ENCODE measurements at regions of chr19 and their contacts with region 1.

Region 1: DNA sequence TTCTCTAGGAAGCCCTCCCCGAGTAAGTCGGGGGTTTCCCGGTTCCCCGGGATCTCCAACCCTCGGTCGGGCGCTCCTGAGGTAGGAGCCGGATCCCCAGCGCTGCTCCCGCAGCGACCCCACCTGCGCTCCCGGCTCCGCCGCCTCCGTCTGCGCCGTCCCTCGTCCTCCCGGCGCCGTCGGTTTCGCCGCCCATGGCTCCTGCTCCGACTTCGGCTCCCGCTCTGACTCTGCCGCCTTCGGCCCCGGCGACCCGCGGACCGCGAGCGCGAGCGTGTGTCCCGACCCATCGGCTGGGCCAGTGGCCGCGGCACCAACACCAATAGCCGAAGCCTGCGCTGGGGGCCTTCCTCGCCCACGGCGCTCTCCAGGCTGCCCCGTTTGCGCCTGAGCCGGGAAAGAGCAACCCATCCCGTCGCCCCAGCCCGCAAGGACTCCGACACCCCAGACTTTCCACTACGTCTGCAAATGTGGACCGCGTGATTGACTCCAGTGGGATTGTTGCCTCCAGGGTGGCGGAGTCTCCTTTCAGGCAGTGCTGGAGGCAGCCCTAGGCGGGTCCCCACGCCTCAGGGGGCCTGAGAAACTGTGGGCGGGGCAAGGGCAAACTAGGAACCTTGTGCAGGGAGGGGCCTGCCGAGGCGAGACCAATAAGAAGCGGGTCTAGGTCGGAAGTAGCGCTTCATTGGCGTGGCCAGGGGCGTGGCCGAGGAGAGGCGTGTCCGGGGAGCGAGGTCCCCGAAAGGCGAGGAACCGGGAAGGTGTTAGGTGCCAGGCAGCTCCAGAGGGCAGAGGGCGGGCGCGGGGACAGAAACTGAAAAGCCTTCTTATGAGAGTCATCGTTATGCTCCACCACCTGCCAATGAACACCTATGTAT is at the start of gene CACTIN:
- DNase-seq: peak; percentile 97 to 100 (median 99)
- ATAC-seq: peak; percentile 99
- H3K4me3 ChIP-seq: peak within 1 kb of the TSS; percentile 73
- H3K4me3 Mint-ChIP-seq: peak within 1 kb of the TSS; percentile 85 to 98 (median 94)
- H3K27ac ChIP-seq: peak within 1 kb of the TSS; percentile 81
- H3K27ac Mint-ChIP-seq: peak within 1 kb of the TSS; percentile 94 to 100 (median 99)
- H3K4me1 ChIP-seq: peaks cover 8 to 16% of the 10 kb centered on the region in 2 donors
- H3K4me1 Mint-ChIP-seq: peaks cover 23 to 43% (median 27%) of the 10 kb centered on the region in 7 donors
- H3K27me3 ChIP-seq: no peaks in the 10 kb centered on the region
- H3K27me3 Mint-ChIP-seq: no peaks in the 10 kb centered on the region
- total RNA-seq, gene CACTIN: 35.4 to 46.7 (median 37.1) TPM

Region 2: GRCh38 chr19:3185482-3186376 is 441.0 kb before region 1 on chr19 and contains the start of gene NCLN:
- CTCF ChIA-PET with region 1: no interaction called
- POLR2A ChIA-PET with region 1: no interaction called
- intact Hi-C with region 1: loop called in 1 of 2 experiments (anchors 5 kb)
- DNase-seq: peak; percentile 92 to 98 (median 95)
- ATAC-seq: peak; percentile 94
- H3K4me3 ChIP-seq: peak within 1 kb of the TSS; percentile 71
- H3K4me3 Mint-ChIP-seq: peak within 1 kb of the TSS; percentile 86 to 99 (median 94)
- H3K27ac ChIP-seq: peak within 1 kb of the TSS; percentile 74
- H3K27ac Mint-ChIP-seq: peak within 1 kb of the TSS; percentile 89 to 99 (median 91)
- H3K4me1 ChIP-seq: peaks cover 53 to 63% of the 10 kb centered on the region in 2 donors
- H3K4me1 Mint-ChIP-seq: peaks cover 43 to 66% (median 54%) of the 10 kb centered on the region in 7 donors
- H3K27me3 ChIP-seq: no peaks in the 10 kb centered on the region
- H3K27me3 Mint-ChIP-seq: peaks cover 0 to 2% (median 0%) of the 10 kb centered on the region in 5 donors
- total RNA-seq, gene NCLN: 45.4 to 64.7 (median 53.7) TPM

Region 3: DNA sequence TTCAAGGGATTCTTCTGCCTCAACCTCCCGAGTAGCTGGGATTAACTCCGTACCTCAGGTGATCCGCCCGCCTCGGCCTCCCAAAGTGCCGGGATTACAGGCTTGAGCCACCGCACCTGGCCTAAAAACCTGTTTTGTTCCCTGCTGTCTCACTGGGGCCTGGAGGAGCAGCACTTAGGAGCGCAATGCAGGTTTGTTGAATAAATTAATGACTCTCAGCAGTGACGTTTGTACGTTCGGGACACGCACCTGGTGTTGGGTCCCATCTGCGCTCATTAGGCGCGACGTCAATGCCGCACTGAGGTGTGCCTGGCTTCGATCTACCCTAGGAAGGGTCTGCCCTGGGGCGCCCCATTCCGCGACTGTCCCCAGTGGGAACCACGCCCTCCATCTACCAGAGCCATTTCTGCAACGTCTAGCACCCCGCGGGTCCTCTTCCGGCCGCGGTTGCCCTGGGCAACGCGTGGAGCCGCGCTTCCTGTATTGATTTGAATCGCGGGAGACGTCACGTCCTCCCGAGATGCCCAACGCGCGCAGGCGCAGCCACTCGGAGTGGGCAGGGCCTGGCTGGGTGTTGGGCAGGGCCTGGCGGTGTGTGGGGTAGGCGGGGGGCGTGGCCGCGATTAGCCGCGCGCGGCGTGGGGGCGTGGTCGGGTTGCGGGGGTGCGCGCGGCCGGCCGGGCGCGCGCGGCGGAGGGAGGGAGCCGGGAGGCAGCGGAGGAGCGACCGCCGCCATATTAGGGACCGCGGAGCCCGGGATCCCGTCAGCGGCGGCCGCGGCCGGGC is 120.9 kb before region 1 on chr19 and contains the start of gene FZR1:
- CTCF ChIA-PET with region 1: no interaction called
- POLR2A ChIA-PET with region 1: no interaction called
- intact Hi-C with region 1: loop called (anchors 1 kb)
- DNase-seq: peak; percentile 98 to 100 (median 100)
- ATAC-seq: peak; percentile 96
- H3K4me3 ChIP-seq: peak within 1 kb of the TSS; percentile 97
- H3K4me3 Mint-ChIP-seq: peak within 1 kb of the TSS; percentile 88 to 98 (median 92)
- H3K27ac ChIP-seq: peak within 1 kb of the TSS; percentile 95
- H3K27ac Mint-ChIP-seq: peak within 1 kb of the TSS; percentile 91 to 98 (median 96)
- H3K4me1 ChIP-seq: peaks cover 14 to 23% of the 10 kb centered on the region in 2 donors
- H3K4me1 Mint-ChIP-seq: peaks cover 29 to 57% (median 44%) of the 10 kb centered on the region in 7 donors
- H3K27me3 ChIP-seq: no peaks in the 10 kb centered on the region
- H3K27me3 Mint-ChIP-seq: peaks cover 0 to 3% (median 0%) of the 10 kb centered on the region in 5 donors
- total RNA-seq, gene FZR1: 60.7 to 90.7 (median 71.3) TPM

Region 4: DNA sequence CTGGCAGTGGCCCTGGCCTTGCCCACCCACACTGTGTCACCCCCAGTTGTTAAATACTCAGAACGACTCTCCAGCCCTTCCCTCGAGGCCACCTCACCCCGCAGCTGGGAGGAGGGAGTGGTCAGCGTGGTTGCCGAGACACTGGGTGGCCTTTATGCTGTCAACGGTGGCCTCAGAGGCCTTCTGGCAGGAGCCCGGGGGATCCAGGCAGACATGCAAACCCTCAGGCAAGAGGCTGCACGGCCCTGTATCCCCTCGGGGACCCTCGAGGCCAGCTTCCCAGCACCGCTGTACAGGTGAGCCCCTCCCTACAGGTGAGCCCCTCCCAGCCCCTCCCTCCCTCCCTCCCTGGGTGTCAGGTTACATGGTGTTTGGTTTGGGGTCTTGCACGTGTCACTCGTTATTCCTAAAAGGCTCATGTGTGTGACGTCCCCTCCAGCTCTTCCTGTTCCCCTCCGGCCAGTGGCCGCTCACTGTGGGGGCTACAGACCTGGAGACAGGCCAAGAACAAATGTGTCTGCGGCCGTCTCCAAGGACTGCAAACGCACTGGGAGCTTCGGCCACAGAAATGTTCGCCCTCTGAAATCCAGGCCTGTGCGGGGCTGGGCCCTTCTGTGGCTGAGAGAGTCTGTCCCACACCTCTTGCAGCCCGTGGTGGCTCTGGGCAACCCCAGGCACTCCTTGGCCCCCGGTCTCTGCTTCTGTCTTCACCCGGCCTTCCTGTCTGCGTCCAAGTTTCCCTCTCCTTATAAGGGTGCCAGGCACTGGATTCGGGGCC is 87.6 kb before region 1 on chr19 and contains the start of gene TEKTIP1:
- CTCF ChIA-PET with region 1: no interaction called
- POLR2A ChIA-PET with region 1: no interaction called
- intact Hi-C with region 1: no loop called
- DNase-seq: no peak
- ATAC-seq: no peak
- H3K4me3 ChIP-seq: no peak within 1 kb of the TSS
- H3K4me3 Mint-ChIP-seq: no peak within 1 kb of the TSS
- H3K27ac ChIP-seq: no peak within 1 kb of the TSS
- H3K27ac Mint-ChIP-seq: peak within 1 kb of the TSS in 6 of 9 donors; percentile 12 to 76 (median 37)
- H3K4me1 ChIP-seq: no peaks in the 10 kb centered on the region
- H3K4me1 Mint-ChIP-seq: peaks cover 0 to 2% (median 0%) of the 10 kb centered on the region in 7 donors
- H3K27me3 ChIP-seq: no peaks in the 10 kb centered on the region
- H3K27me3 Mint-ChIP-seq: no peaks in the 10 kb centered on the region
- total RNA-seq, gene TEKTIP1: 5.6 to 11.5 (median 10.6) TPM

Region 5: GRCh38 chr19:3572132-3572854 is 54.4 kb before region 1 on chr19:
- CTCF ChIA-PET with region 1: no interaction called
- POLR2A ChIA-PET with region 1: interaction called, 3 read pairs
- intact Hi-C with region 1: loop called (anchors 1 kb)
- DNase-seq: peak; percentile 94 to 99 (median 98)
- ATAC-seq: peak; percentile 96
- H3K4me3 ChIP-seq: peak overlapping the region; percentile 75
- H3K4me3 Mint-ChIP-seq: peak overlapping the region; percentile 72 to 91 (median 82)
- H3K27ac ChIP-seq: peak overlapping the region; percentile 62
- H3K27ac Mint-ChIP-seq: peak overlapping the region in 8 of 9 donors; percentile 30 to 84 (median 61)
- H3K4me1 ChIP-seq: peaks cover 12 to 13% of the 10 kb centered on the region in 2 donors
- H3K4me1 Mint-ChIP-seq: peaks cover 11 to 29% (median 14%) of the 10 kb centered on the region in 7 donors
- H3K27me3 ChIP-seq: no peaks in the 10 kb centered on the region
- H3K27me3 Mint-ChIP-seq: no peaks in the 10 kb centered on the region

Region 6: GRCh38 chr19:3700221-3701032 is 73.7 kb after region 1 on chr19 and contains the start of gene PIP5K1C:
- CTCF ChIA-PET with region 1: no interaction called
- POLR2A ChIA-PET with region 1: no interaction called
- intact Hi-C with region 1: loop called in 1 of 2 experiments (anchors 1 kb)
- DNase-seq: peak; percentile 82 to 98 (median 90)
- ATAC-seq: peak; percentile 100
- H3K4me3 ChIP-seq: peak within 1 kb of the TSS; percentile 66
- H3K4me3 Mint-ChIP-seq: peak within 1 kb of the TSS; percentile 88 to 97 (median 92)
- H3K27ac ChIP-seq: peak within 1 kb of the TSS; percentile 67
- H3K27ac Mint-ChIP-seq: peak within 1 kb of the TSS in 8 of 9 donors; percentile 60 to 91 (median 82)
- H3K4me1 ChIP-seq: peaks cover 0 to 9% of the 10 kb centered on the region in 2 donors
- H3K4me1 Mint-ChIP-seq: peaks cover 6 to 41% (median 28%) of the 10 kb centered on the region in 7 donors
- H3K27me3 ChIP-seq: no peaks in the 10 kb centered on the region
- H3K27me3 Mint-ChIP-seq: peaks cover 0 to 6% (median 0%) of the 10 kb centered on the region in 5 donors
- total RNA-seq, gene PIP5K1C: 21.5 to 32.4 (median 30.7) TPM

Region 7: DNA sequence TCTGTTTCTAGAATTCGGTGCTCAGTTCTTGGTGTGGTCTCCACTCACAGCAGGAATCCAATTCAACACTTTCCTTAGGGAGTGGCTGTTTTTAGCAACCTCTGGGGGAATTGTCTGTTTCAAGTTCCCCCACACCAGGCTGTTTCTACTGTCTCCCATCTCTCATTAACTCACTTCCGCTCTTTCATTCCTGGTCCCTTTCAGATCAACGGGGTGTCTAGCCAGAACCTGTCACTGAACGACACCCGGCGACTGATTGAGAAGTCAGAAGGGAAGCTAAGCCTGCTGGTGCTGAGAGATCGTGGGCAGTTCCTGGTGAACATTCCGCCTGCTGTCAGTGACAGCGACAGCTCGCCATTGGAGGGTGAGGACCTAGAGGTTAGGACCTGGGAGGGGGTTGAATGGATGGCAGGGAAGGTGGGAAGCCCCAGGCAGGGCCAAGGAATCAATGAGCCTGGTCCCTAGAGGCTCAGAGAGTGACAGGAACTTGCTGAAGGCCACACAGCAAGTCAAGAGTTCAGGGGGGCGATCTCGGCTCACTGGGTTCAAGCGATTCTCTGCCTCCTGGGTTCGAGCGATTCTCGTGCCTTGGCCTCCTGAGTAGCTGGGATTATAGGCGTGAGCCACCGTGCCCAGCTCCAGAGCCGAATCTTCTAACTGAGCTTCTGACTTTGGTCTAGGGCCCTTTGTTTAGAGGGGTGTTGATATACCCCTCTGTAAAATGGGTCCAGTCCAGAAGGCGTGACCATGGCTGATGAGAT is 107.0 kb after region 1 on chr19:
- CTCF ChIA-PET with region 1: no interaction called
- POLR2A ChIA-PET with region 1: no interaction called
- intact Hi-C with region 1: no loop called
- DNase-seq: no peak
- ATAC-seq: no peak
- H3K4me3 ChIP-seq: no peak overlapping the region
- H3K4me3 Mint-ChIP-seq: no peak overlapping the region
- H3K27ac ChIP-seq: no peak overlapping the region
- H3K27ac Mint-ChIP-seq: peak overlapping the region in 4 of 9 donors; percentile 26 to 67 (median 44)
- H3K4me1 ChIP-seq: peaks cover 0 to 6% of the 10 kb centered on the region in 2 donors
- H3K4me1 Mint-ChIP-seq: peaks cover 0 to 12% (median 7%) of the 10 kb centered on the region in 7 donors
- H3K27me3 ChIP-seq: no peaks in the 10 kb centered on the region
- H3K27me3 Mint-ChIP-seq: no peaks in the 10 kb centered on the region

Region 8: GRCh38 chr19:4182084-4182810 is 555.5 kb after region 1 on chr19 and contains the starts of genes ANKRD24 and SIRT6:
- CTCF ChIA-PET with region 1: no interaction called
- POLR2A ChIA-PET with region 1: no interaction called
- intact Hi-C with region 1: loop called in 1 of 2 experiments (anchors 2 kb)
- DNase-seq: peak; percentile 91 to 97 (median 96)
- ATAC-seq: peak; percentile 90
- H3K4me3 ChIP-seq: peak within 1 kb of the TSS; percentile 90
- H3K4me3 Mint-ChIP-seq: peak within 1 kb of the TSS; percentile 92 to 99 (median 96)
- H3K27ac ChIP-seq: peak within 1 kb of the TSS; percentile 86
- H3K27ac Mint-ChIP-seq: peak within 1 kb of the TSS; percentile 92 to 98 (median 95)
- H3K4me1 ChIP-seq: peaks cover 14 to 15% of the 10 kb centered on the region in 2 donors
- H3K4me1 Mint-ChIP-seq: peaks cover 25 to 44% (median 39%) of the 10 kb centered on the region in 7 donors
- H3K27me3 ChIP-seq: no peaks in the 10 kb centered on the region
- H3K27me3 Mint-ChIP-seq: peaks cover 0 to 2% (median 0%) of the 10 kb centered on the region in 5 donors
- total RNA-seq, gene ANKRD24: 0.75 to 2.8 (median 2.4) TPM
- total RNA-seq, gene SIRT6: 20.0 to 41.2 (median 26.0) TPM

Region 9: GRCh38 chr19:4723367-4724187 is 1096.9 kb after region 1 on chr19 and contains the start of gene DPP9:
- CTCF ChIA-PET with region 1: no interaction called
- POLR2A ChIA-PET with region 1: no interaction called
- intact Hi-C with region 1: loop called in 1 of 2 experiments (anchors 5 kb)
- DNase-seq: peak; percentile 84 to 100 (median 99)
- ATAC-seq: peak; percentile 99
- H3K4me3 ChIP-seq: peak within 1 kb of the TSS; percentile 96
- H3K4me3 Mint-ChIP-seq: peak within 1 kb of the TSS; percentile 83 to 99 (median 95)
- H3K27ac ChIP-seq: peak within 1 kb of the TSS; percentile 87
- H3K27ac Mint-ChIP-seq: peak within 1 kb of the TSS; percentile 93 to 100 (median 98)
- H3K4me1 ChIP-seq: peaks cover 19 to 26% of the 10 kb centered on the region in 2 donors
- H3K4me1 Mint-ChIP-seq: peaks cover 21 to 48% (median 37%) of the 10 kb centered on the region in 7 donors
- H3K27me3 ChIP-seq: no peaks in the 10 kb centered on the region
- H3K27me3 Mint-ChIP-seq: peaks cover 0 to 10% (median 5%) of the 10 kb centered on the region in 5 donors
- total RNA-seq, gene DPP9: 71.2 to 90.7 (median 81.4) TPM

Region 10: GRCh38 chr19:5339950-5340636 is 1713.4 kb after region 1 on chr19:
- CTCF ChIA-PET with region 1: no interaction called
- POLR2A ChIA-PET with region 1: no interaction called
- intact Hi-C with region 1: no loop called
- DNase-seq: peak in 1 of 9 donors; percentile 15
- ATAC-seq: no peak
- H3K4me3 ChIP-seq: no peak overlapping the region
- H3K4me3 Mint-ChIP-seq: peak overlapping the region; percentile 36 to 82 (median 75)
- H3K27ac ChIP-seq: no peak overlapping the region
- H3K27ac Mint-ChIP-seq: no peak overlapping the region
- H3K4me1 ChIP-seq: peaks cover 0 to 8% of the 10 kb centered on the region in 2 donors
- H3K4me1 Mint-ChIP-seq: peaks cover 7 to 33% (median 24%) of the 10 kb centered on the region in 7 donors
- H3K27me3 ChIP-seq: no peaks in the 10 kb centered on the region
- H3K27me3 Mint-ChIP-seq: peaks cover 52 to 65% (median 61%) of the 10 kb centered on the region in 5 donors

Measured in naive thymus-derived CD4-positive, alpha-beta T cell (primary cell).